Esophagus squamous epithelium (tissue), 5 donors: ENCODE measurements at regions of chr10 and their contacts with region 1.

Region 1: GRCh38 chr10:99711129-99711719 is 20.7 kb downstream of the COX15 start:
- DNase-seq: no peak
- H3K4me3 ChIP-seq: no peak overlapping the region
- H3K27ac ChIP-seq: peak overlapping the region in 2 of 4 donors; percentile 10 to 91
- H3K4me1 ChIP-seq: peaks cover 2 to 34% (median 22%) of the 10 kb centered on the region in 3 donors
- H3K27me3 ChIP-seq: no peaks in the 10 kb centered on the region
- CTCF ChIP-seq: peak in 5 of 6 experiments; percentile 41 to 57 (median 56)
- POLR2A ChIP-seq: no peak

Region 2: DNA sequence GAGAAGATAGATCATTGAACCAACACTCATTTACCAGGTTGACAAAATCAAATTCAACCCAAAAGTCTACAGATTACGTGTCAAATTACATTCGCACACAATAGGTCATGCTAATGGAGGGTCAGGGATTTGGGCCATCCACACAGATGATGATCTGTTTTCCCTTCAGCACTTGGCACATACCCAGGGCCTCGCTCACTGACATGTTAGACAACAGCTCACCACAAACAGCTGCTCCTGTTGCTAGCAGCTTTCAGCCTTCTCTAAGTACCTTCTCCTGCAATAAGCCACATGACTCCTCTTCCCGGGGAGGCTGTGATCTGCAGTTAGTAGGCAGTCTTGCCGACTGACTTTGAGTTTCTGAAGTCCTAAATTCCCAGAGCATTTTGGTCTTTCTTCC is 160.1 kb before region 1 on chr10:
- intact Hi-C with region 1: loop called (anchors 10 kb)
- DNase-seq: no peak
- H3K4me3 ChIP-seq: no peak overlapping the region
- H3K27ac ChIP-seq: no peak overlapping the region
- H3K4me1 ChIP-seq: no peaks in the 10 kb centered on the region
- H3K27me3 ChIP-seq: peaks cover 0 to 98% (median 0%) of the 10 kb centered on the region in 4 donors
- CTCF ChIP-seq: no peak
- POLR2A ChIP-seq: no peak

Region 3: GRCh38 chr10:99654795-99655194 is 56.4 kb before region 1 on chr10:
- intact Hi-C with region 1: no loop called
- DNase-seq: no peak
- H3K4me3 ChIP-seq: no peak overlapping the region
- H3K27ac ChIP-seq: peak overlapping the region in 3 of 4 donors; percentile 82 to 94 (median 86)
- H3K4me1 ChIP-seq: peaks cover 12 to 72% (median 21%) of the 10 kb centered on the region in 3 donors
- H3K27me3 ChIP-seq: no peaks in the 10 kb centered on the region
- CTCF ChIP-seq: no peak
- POLR2A ChIP-seq: no peak

Region 4: DNA sequence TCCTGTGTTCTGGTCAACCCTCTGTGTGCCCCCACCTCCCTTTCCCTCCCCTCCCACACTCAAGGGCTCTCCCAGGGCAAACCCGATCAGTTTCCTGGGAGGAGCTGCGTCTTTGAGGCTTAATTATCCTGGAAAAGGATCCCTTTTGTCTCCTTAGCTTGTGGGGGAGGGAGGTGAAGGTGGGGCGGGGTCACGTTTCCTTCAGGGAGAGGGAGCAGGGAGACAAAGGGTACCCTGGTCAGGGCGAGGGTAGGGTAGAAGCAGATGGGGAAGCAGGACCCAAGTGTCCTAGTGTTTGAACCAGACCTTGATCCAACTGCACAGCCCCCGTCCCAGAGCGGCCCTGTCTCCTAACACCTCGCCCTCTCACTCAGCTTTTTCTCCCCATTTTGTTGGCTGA is 914.6 kb after region 1 on chr10:
- intact Hi-C with region 1: no loop called
- DNase-seq: no peak
- H3K4me3 ChIP-seq: no peak overlapping the region
- H3K27ac ChIP-seq: no peak overlapping the region
- H3K4me1 ChIP-seq: peaks cover 0 to 5% (median 0%) of the 10 kb centered on the region in 3 donors
- H3K27me3 ChIP-seq: peaks cover 0 to 98% (median 2%) of the 10 kb centered on the region in 4 donors
- CTCF ChIP-seq: no peak
- POLR2A ChIP-seq: no peak